ENCODE measurements at regions of chr15 and their contacts with region 1.

Region 1: DNA sequence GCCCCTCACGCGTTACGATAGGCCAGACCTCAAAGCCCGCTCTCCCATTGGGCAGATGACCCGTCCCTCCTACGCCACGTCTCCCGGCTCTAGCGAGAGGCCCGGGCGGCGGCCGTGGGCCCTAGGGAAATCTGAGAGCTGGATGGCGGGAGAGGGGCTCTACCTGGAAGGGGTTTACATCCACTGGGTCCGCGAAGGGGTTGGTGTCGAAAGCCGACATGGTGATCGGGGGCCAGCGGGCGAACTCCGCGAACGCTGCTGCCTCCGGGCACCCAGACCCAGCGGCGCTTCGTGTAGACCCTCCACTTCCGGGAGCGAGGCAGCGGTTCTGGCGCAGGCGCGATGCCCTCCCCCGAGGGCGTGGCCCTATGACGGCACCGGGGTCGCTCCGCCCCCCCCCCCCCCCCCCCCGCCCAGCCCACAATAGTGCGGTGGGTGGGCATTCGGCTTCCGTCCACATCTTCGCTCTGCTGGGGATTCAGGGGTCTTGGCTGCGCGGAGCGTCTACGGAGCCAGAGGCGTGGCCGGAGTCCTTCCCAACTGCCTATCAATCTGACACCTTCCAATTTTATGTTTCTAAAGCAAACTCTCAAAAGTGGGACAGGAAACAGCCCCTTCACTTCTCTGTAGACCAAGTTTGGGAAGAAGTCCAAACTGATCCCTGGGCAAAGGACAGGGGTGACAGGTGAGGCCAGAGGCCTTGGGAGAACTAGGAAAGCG is at the start of gene SCAMP2:
- DNase-seq: peak; percentile 96
- CTCF ChIP-seq: no peak

Region 2: GRCh38 chr15:74842581-74843444 is 30.4 kb before region 1 on chr15 and contains the start of gene ULK3:
- CTCF ChIA-PET with region 1: interaction called, 12 read pairs
- POLR2A ChIA-PET with region 1: interaction called, 5 read pairs
- DNase-seq: peak; percentile 97
- CTCF ChIP-seq: peak; percentile 63

Region 3: DNA sequence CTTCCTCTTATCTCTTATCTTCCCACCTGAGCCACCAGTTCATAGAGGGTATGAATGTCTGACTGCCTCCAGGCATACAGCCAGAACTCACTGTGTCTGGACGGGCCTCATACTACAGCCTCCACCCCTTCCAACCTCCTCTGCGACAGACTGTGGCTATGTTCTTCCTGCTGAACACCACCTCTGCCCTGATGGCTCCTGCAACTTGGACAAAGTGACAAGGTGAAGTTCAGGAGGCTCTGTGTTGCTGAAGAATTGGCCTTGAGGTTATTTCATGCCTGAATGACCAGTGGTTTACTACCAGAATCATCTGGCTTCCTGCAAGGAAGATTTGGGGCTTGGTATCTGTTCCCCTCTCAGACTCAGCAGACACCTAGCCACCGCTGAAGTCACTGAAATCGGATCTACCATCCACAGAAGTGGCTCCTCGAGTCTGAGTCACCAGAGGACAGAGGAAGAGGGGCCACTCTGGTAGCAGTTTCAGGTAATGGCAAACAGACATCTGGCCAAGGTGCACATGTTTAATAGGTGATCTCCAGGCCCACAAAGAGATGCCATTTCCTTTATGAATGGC is 16.0 kb before region 1 on chr15:
- CTCF ChIA-PET with region 1: interaction called, 36 read pairs
- POLR2A ChIA-PET with region 1: interaction called, 19 read pairs
- DNase-seq: peak; percentile 70
- CTCF ChIP-seq: no peak

Region 4: GRCh38 chr15:74884428-74885223 is 11.4 kb after region 1 on chr15:
- CTCF ChIA-PET with region 1: interaction called, 10 read pairs
- POLR2A ChIA-PET with region 1: interaction called, 8 read pairs
- DNase-seq: no peak
- CTCF ChIP-seq: no peak

Measured in GM10248 (cell line).